ENCODE measurements at regions of chr5 and their contacts with region 1.

Region 1: DNA sequence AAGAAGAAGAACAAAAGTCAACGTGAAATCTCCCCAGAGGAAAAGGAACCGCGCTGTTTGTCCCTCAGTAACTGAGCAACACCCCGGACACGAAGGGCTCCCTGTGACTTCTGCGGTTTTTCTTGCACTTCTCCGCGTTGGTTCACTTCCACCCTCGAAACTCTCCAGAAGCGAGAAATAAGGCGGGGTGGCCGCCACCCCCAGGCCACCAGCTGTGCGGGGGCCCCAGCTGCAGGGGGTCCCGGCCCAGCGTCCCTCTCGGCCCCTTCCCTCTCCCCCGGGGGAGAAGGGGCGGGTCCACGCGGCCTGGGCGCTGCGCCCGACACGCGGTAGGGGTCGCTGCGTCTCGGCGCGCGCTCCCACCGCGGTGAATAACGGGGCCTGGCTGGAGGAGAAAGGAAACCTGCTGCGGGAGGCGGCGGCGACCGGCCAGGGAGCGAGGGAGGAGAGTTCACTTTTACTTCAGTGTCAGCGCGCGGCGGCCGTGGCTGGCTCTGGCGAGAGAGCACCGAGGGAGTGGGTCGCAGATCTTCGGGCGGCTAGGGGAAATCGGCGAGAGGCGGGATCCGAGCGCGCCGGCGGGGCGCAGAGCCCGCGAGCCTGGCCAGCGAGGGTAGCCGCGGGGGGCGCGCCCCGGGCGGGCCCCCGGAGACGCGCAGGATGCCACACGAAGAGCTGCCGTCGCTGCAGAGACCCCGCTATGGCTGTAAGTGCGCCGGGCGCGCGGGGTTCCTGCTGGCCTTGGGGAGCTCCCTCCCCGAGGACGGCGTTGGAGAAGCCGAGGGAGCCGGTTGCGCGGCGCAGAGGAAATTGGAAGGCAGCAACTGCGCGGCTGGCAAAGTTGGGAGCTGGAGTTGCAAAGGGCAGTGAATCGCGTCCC is at the start of gene IQGAP2:
- DNase-seq: peak; percentile 79
- ATAC-seq: peak; percentile 40
- H3K4me3 Mint-ChIP-seq: peak within 1 kb of the TSS; percentile 90
- H3K27ac Mint-ChIP-seq: peak within 1 kb of the TSS; percentile 92
- H3K4me1 Mint-ChIP-seq: peaks cover 50% of the 10 kb centered on the region
- H3K27me3 Mint-ChIP-seq: no peaks in the 10 kb centered on the region; the same call in 1 of the 2 replicates
- CTCF ChIP-seq: peak; percentile 68
- total RNA-seq, gene IQGAP2: 63.0 to 70.6 TPM (median 64.4 TPM) in 3 replicates

Region 2: DNA sequence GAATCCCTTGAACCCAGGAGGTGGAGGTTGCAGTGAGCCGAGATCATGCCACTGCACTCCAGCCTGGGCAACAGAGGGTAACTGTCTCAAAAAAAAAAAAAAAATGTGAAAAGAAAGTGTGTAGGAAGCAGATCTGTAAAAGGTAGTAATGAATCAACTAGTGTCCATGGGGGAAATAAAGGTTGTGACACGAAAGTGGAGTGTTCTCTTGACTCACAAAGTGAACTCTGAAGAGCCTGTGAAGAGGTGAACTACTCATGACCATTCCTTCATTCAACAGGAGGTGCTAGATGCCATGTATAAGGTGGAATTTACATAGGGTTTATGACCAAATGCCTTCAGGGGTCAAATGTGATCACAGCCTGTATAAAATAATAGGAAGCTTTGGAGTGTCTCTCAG is 12.7 kb after region 1 on chr5:
- CTCF ChIA-PET with region 1: interaction called, 11 read pairs
- POLR2A ChIA-PET with region 1: no interaction called
- DNase-seq: no peak
- ATAC-seq: no peak
- H3K4me3 Mint-ChIP-seq: no peak overlapping the region
- H3K27ac Mint-ChIP-seq: no peak overlapping the region
- H3K4me1 Mint-ChIP-seq: peaks cover 34% of the 10 kb centered on the region
- H3K27me3 Mint-ChIP-seq: no peaks in the 10 kb centered on the region
- CTCF ChIP-seq: no peak

Region 3: GRCh38 chr5:76483433-76483832 is 80.3 kb after region 1 on chr5:
- CTCF ChIA-PET with region 1: interaction called, 18 read pairs
- POLR2A ChIA-PET with region 1: no interaction called
- DNase-seq: peak; percentile 29
- ATAC-seq: peak; percentile 85
- H3K4me3 Mint-ChIP-seq: no peak overlapping the region
- H3K27ac Mint-ChIP-seq: peak overlapping the region; percentile 79; the same call in 1 of the 2 replicates
- H3K4me1 Mint-ChIP-seq: peaks cover 79% of the 10 kb centered on the region
- H3K27me3 Mint-ChIP-seq: no peaks in the 10 kb centered on the region
- CTCF ChIP-seq: no peak

Region 4: DNA sequence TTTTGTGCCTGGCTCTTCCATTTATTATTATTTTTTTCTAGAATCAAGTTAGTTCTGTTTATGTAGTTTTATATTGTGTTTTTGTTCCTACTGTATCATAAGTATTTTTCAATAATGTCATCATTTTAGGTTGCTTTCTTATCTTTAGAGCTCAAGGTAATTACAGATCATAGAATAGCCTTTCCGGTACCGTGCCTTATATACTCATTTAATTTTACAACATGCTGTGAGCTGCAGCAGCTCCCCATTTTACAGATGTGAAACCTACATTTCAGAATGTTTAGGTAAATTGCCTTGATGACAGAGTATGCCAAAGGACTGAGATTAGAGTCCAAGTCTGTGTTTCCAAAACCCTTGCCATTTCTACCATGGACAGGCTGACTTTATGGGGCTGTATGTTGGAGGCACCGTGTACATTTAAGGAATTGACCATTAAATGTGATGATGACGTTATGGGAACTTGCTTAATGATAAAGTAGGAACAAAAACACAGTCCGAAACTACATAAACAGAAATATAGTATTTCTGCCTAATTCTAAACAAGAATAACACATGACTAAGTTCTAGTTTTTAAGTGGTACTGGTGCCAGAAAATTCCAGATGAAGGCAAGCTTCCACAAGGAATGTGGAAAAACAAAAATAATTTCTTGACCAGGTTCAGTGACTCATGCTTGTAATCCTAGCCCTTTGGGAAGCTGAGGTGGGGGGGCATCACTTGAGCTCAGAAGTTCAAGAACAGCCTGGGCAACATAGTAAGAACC is 97.7 kb after region 1 on chr5:
- CTCF ChIA-PET with region 1: interaction called, 11 read pairs
- POLR2A ChIA-PET with region 1: no interaction called
- DNase-seq: no peak
- ATAC-seq: no peak
- H3K4me3 Mint-ChIP-seq: no peak overlapping the region
- H3K27ac Mint-ChIP-seq: 0 out of 2 replicates have a peak overlapping the region, but pooled peaks have one; percentile 15
- H3K4me1 Mint-ChIP-seq: peaks cover 78% of the 10 kb centered on the region
- H3K27me3 Mint-ChIP-seq: no peaks in the 10 kb centered on the region
- CTCF ChIP-seq: no peak

Region 5: DNA sequence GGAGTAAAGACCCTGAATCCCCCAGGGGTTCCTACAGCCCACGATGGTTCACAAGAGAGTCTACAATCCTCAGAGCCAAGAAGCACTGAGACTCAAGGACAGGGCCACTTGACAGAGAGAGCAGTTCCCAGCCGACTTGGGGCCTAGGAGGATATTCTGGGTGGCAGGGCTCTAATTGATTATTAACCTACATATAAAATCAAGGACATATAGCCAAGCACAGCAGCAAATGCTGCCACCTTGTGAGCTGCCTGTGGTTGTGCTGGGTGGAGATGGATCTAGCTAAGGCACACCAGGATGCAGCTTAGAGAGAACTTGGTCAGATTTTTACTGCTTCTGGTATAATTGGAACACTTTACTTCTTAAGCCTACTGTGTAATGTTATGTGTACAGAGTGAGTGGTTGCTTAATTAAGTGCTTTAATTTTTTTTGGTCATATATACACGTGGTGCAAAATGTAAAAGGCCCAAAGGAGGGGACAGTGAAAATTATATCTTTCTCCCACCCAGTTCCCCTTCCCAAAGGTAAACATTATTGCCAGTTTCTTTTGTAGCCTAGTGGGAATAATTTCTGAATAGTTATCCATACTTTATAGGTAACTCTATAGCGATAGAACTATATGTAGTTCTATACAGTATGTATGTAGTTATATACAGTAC is 141.3 kb after region 1 on chr5:
- CTCF ChIA-PET with region 1: interaction called, 71 read pairs
- POLR2A ChIA-PET with region 1: interaction called, 3 read pairs
- DNase-seq: peak; percentile 54
- ATAC-seq: peak; percentile 88
- H3K4me3 Mint-ChIP-seq: no peak overlapping the region
- H3K27ac Mint-ChIP-seq: no peak overlapping the region
- H3K4me1 Mint-ChIP-seq: peaks cover 44% of the 10 kb centered on the region
- H3K27me3 Mint-ChIP-seq: no peaks in the 10 kb centered on the region
- CTCF ChIP-seq: 0 out of 2 replicates have a peak, but pooled peaks have one; percentile 26

Region 6: GRCh38 chr5:76601470-76601869 is 198.3 kb after region 1 on chr5:
- CTCF ChIA-PET with region 1: interaction called, 10 read pairs
- POLR2A ChIA-PET with region 1: no interaction called
- DNase-seq: no peak
- ATAC-seq: peak; percentile 69
- H3K4me3 Mint-ChIP-seq: no peak overlapping the region
- H3K27ac Mint-ChIP-seq: no peak overlapping the region
- H3K4me1 Mint-ChIP-seq: no peaks in the 10 kb centered on the region
- H3K27me3 Mint-ChIP-seq: no peaks in the 10 kb centered on the region
- CTCF ChIP-seq: peak; percentile 69

Measured in WTC11 (cell line).